ENCODE measurements at regions of chr19 and their contacts with region 1.

Region 1: DNA sequence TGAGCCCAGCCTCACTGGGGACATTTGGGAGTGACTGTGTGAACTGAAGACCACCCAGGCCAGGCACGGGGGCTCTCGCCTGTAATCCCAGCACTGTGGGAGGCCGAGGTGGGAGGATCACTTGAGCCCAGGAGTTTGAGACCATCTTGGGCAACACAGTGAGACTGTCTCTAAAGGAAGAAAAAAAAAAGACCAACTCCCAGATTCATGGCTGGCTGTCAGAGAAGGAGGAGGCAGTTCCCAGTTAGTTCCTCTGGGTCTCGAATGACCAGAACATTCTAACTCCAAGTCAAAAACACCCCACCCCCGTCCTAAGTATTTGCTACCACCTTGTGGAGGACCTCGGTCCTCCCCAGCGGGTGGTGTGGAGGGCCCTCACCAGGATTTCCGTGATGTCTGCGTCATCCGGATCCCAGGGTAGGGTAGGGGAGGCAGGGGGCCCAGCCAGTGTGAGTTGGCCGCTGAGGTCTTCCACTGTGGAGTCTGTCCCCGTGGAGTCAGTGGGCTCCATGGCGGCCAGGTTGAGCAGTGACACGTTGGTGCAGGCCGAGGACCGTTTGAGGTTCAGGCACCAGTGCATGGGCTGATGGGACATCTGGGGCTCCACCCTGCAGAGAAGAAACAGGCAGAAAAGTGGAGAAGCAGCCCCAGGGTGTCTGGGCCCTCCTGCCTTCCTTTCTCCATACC is 1.3 kb downstream of the TSKS start:
- DNase-seq: no peak
- ATAC-seq: no peak

Region 2: DNA sequence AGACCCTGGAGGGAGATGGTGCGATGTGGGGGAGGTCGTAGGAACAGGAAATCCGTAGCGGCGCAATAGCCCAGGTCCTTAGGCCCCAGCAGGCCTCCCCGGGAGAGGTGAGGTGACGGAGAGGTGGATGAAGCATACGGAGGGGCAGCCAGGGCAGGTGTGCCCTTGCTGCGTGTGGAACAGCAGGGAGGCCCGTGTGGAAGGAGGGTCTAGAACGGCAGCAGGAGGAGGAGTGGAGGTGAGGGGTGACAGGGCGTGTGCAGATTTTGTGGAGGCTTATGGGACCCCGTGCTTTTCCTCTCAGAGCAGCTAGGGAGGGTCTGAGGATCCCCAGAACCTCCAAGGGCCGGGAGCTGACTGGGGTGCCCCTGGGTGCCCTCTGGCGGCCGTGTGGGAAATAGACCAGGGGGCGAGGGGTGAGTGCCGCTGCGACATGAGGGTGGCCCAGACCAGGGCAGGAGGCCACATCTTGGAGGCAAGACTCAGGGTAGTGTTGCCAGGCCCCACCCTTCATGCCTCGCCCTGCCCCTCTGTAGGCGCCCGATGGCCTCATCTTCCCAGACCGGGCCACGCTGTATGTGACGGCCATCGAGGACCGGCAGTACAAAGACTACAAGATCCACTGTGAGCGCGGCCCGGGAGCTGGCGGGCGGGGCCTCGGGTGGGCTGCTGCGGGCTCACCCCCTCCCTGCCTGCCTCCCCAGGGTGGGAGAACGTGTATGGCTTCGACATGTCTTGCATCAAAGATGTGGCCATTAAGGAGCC is 77.4 kb before region 1 on chr19:
- intact Hi-C with region 1: loop called in 1 of 2 experiments (anchors 2 kb)
- DNase-seq: peak in 1 of 2 donors; percentile 11
- ATAC-seq: peak; percentile 36

Region 3: GRCh38 chr19:49808711-49809159 is 47.0 kb after region 1 on chr19:
- intact Hi-C with region 1: no loop called
- DNase-seq: peak; percentile 93 to 97
- ATAC-seq: peak; percentile 72

Region 4: GRCh38 chr19:50173140-50173539 is 411.4 kb after region 1 on chr19:
- intact Hi-C with region 1: no loop called
- DNase-seq: peak; percentile 70 to 90
- ATAC-seq: peak; percentile 94

Measured in left colon (tissue), 2 donors.